ENCODE measurements at regions of chr5 and their contacts with region 1.

Region 1: GRCh38 chr5:6291961-6292360 is 86.4 kb downstream of the MED10 start:
- DNase-seq: peak in 6 of 9 donors; percentile 17 to 49 (median 28)
- ATAC-seq: no peak
- H3K4me3 ChIP-seq: no peak overlapping the region
- H3K4me3 Mint-ChIP-seq: no peak overlapping the region
- H3K27ac ChIP-seq: no peak overlapping the region
- H3K27ac Mint-ChIP-seq: no peak overlapping the region
- H3K4me1 ChIP-seq: no peaks in the 10 kb centered on the region
- H3K4me1 Mint-ChIP-seq: no peaks in the 10 kb centered on the region
- H3K27me3 ChIP-seq: no peaks in the 10 kb centered on the region
- H3K27me3 Mint-ChIP-seq: peaks cover 0 to 20% (median 7%) of the 10 kb centered on the region in 5 donors

Region 2: DNA sequence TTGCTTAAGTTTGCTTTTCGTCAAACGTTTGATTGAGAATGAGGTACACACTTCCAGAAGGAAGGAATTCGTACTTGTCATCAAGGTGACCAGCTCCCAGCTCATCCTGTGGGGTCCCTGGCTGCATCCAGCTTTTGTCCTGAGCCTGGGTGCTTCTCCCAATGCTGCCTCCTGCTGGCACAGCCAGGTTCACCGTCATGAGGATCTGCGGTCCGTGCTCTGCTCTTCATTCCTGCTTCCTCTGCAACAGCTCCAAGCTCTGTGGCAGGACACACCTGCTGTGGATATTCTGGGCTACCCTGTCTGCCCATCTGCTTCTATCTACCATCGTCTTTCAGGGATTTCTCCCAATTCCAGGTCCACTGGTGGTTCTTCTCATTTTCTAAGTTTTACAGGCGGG is 143.4 kb after region 1 on chr5:
- CTCF ChIA-PET with region 1: no interaction called
- POLR2A ChIA-PET with region 1: no interaction called
- intact Hi-C with region 1: loop called (anchors 1 to 5 kb)
- DNase-seq: no peak
- ATAC-seq: no peak
- H3K4me3 ChIP-seq: no peak overlapping the region
- H3K4me3 Mint-ChIP-seq: no peak overlapping the region
- H3K27ac ChIP-seq: no peak overlapping the region
- H3K27ac Mint-ChIP-seq: no peak overlapping the region
- H3K4me1 ChIP-seq: no peaks in the 10 kb centered on the region
- H3K4me1 Mint-ChIP-seq: peaks cover 0 to 5% (median 0%) of the 10 kb centered on the region in 7 donors
- H3K27me3 ChIP-seq: peaks cover 4% of the 10 kb centered on the region in 2 donors
- H3K27me3 Mint-ChIP-seq: peaks cover 27 to 37% (median 32%) of the 10 kb centered on the region in 5 donors

Region 3: GRCh38 chr5:6576861-6577501 is 285.0 kb after region 1 on chr5:
- CTCF ChIA-PET with region 1: interaction called, 4 read pairs
- POLR2A ChIA-PET with region 1: no interaction called
- intact Hi-C with region 1: loop called in 1 of 2 experiments (anchors 1 kb)
- DNase-seq: peak in 2 of 9 donors; percentile 10 to 25
- ATAC-seq: no peak
- H3K4me3 ChIP-seq: no peak overlapping the region
- H3K4me3 Mint-ChIP-seq: no peak overlapping the region
- H3K27ac ChIP-seq: no peak overlapping the region
- H3K27ac Mint-ChIP-seq: no peak overlapping the region
- H3K4me1 ChIP-seq: no peaks in the 10 kb centered on the region
- H3K4me1 Mint-ChIP-seq: no peaks in the 10 kb centered on the region
- H3K27me3 ChIP-seq: no peaks in the 10 kb centered on the region
- H3K27me3 Mint-ChIP-seq: peaks cover 22 to 48% (median 39%) of the 10 kb centered on the region in 5 donors

Measured in naive thymus-derived CD4-positive, alpha-beta T cell (primary cell).